HEK293T (cell line): ENCODE measurements at regions of chr7 and their contacts with region 1.

Region 1: DNA sequence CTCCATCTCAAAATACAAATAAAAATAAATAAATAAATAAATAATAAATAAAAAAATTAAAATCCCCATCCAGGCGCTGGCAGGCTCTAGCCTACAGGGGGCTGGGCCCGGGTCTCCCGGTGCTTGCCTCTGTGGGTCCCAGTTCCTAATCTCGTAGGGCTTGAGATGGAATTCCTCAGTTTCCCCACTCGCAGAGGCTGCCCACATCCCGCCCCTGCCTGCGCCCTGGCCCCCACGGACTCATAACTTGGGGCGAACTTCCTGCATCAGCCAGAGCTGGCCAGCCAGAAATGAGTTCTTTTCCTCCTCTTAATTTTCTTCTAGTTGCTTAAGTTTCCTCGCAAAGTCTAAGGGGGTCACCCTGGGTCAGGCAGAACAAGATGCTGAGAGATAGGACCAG is 22.0 kb upstream of the SRRM3 start:
- DNase-seq: no peak

Region 2: GRCh38 chr7:76069238-76069638 is 110.4 kb before region 1 on chr7:
- CTCF ChIA-PET with region 1: no interaction called
- POLR2A ChIA-PET with region 1: no interaction called
- DNase-seq: peak; percentile 20

Region 3: GRCh38 chr7:76122516-76123239 is 57.0 kb before region 1 on chr7:
- CTCF ChIA-PET with region 1: no interaction called
- POLR2A ChIA-PET with region 1: no interaction called
- DNase-seq: no peak

Region 4: GRCh38 chr7:76262683-76263402 is 83.2 kb after region 1 on chr7:
- CTCF ChIA-PET with region 1: interaction called, 15 read pairs
- POLR2A ChIA-PET with region 1: interaction called, 3 read pairs
- DNase-seq: peak; percentile 59